CD14-positive monocyte (primary cell): ENCODE measurements at regions of chr19 and their contacts with region 1.

Region 1: DNA sequence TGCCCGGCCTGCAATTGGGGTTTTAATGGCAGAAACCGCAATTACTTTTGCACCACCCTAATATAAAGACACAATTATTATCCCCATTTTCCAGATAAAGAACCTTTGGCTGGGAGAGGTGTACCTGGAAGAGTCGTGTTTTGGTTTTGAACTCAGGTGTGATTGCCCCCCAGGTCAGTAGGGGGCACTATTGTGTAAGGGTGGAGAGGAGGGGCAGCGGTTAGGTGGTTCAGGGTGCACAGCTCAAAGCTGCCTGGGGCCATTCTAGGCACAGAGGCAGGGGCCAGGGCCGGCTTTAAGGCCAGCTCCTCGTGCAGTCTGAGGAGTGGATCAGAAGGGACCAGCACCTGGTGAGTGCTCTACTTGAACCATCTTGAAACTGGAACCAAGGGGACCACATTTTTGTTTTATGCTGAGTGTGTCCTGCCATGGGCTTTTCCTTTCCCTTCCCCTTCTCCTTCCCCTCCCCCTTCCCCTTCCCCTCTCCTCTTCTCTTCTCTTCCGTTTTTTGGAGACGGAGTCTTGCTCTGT is 5.8 kb upstream of the FCGRT start:
- DNase-seq: peak; percentile 67 to 73 (median 69)
- H3K4me3 ChIP-seq: peak overlapping the region in 1 of 3 experiments; percentile 45
- H3K4me3 Mint-ChIP-seq: peak overlapping the region; percentile 27 to 70
- H3K27ac ChIP-seq: no peak overlapping the region
- H3K27ac Mint-ChIP-seq: peak overlapping the region in 6 of 7 donors; percentile 33 to 88 (median 78)
- H3K4me1 ChIP-seq: peaks cover 32% of the 10 kb centered on the region in 2 donors
- H3K4me1 Mint-ChIP-seq: peaks cover 36% of the 10 kb centered on the region
- H3K27me3 ChIP-seq: no peaks in the 10 kb centered on the region
- H3K27me3 Mint-ChIP-seq: peaks cover 4 to 12% (median 6%) of the 10 kb centered on the region in 3 donors
- CTCF ChIP-seq: peak; percentile 83

Region 2: GRCh38 chr19:49546825-49547565 is 40.4 kb after region 1 on chr19:
- intact Hi-C with region 1: loop called in 1 of 2 experiments (anchors 1 kb)
- DNase-seq: peak; percentile 70 to 80 (median 76)
- H3K4me3 ChIP-seq: no peak overlapping the region
- H3K4me3 Mint-ChIP-seq: peak overlapping the region in 1 of 2 donors; percentile 39
- H3K27ac ChIP-seq: no peak overlapping the region
- H3K27ac Mint-ChIP-seq: peak overlapping the region in 2 of 7 donors; percentile 26 to 65
- H3K4me1 ChIP-seq: peaks cover 11 to 25% of the 10 kb centered on the region in 2 donors
- H3K4me1 Mint-ChIP-seq: peaks cover 17% of the 10 kb centered on the region
- H3K27me3 ChIP-seq: no peaks in the 10 kb centered on the region
- H3K27me3 Mint-ChIP-seq: peaks cover 5% of the 10 kb centered on the region in 3 donors
- CTCF ChIP-seq: peak; percentile 78

Region 3: DNA sequence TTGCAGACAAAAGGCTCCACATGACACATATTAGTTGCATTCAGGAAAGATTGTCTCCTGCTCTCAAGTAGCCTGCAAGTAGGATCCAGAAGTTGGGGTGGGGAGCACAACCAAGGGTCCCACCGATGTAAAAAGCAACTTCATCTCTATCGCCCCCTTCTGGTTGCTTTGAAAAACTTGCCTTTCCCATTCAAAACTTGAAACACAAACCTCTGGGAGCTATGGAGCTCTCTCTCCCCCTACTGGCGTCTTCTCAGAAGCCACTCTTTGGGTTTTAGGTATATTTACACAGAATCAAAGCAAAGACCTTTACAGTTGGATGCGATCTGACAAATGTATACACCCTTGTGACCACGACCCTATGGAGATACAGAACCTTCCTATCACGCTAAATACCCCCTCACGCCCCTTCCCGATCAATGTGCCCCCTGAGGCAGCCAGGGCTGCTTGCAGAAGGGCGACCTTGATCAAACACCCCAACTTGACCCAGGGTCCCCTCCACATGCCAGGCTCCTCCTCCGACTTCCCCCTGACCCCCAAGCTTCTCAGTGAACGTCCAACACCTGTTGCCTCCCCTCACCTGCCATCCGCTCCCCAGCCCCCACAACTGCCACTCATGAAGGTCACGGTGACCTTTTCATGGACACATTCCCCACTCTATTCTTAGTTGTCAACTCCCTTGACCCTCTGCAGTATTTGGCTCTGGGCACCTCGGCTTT is 63.7 kb after region 1 on chr19:
- intact Hi-C with region 1: loop called in 1 of 2 experiments (anchors 2 kb)
- DNase-seq: peak; percentile 72 to 86 (median 82)
- H3K4me3 ChIP-seq: no peak overlapping the region
- H3K4me3 Mint-ChIP-seq: no peak overlapping the region
- H3K27ac ChIP-seq: no peak overlapping the region
- H3K27ac Mint-ChIP-seq: peak overlapping the region in 2 of 7 donors; percentile 39 to 47
- H3K4me1 ChIP-seq: peaks cover 0 to 5% of the 10 kb centered on the region in 2 donors
- H3K4me1 Mint-ChIP-seq: peaks cover 13% of the 10 kb centered on the region
- H3K27me3 ChIP-seq: no peaks in the 10 kb centered on the region
- H3K27me3 Mint-ChIP-seq: no peaks in the 10 kb centered on the region
- CTCF ChIP-seq: peak; percentile 100